ENCODE measurements at regions of chr11 and their contacts with region 1.

Region 1: GRCh38 chr11:87352759-87353707 is 315.3 kb downstream of the TMEM135 start:
- DNase-seq: peak; percentile 80 to 86 (median 85)
- ATAC-seq: peak; percentile 89
- H3K4me3 ChIP-seq: no peak overlapping the region
- H3K27ac ChIP-seq: no peak overlapping the region
- H3K4me1 ChIP-seq: no peaks in the 10 kb centered on the region
- H3K27me3 ChIP-seq: no peaks in the 10 kb centered on the region
- CTCF ChIP-seq: peak; percentile 93 to 99 (median 97)
- POLR2A ChIP-seq: no peak

Region 2: GRCh38 chr11:87421422-87421821 is 68.4 kb after region 1 on chr11:
- intact Hi-C with region 1: loop called (anchors 5 kb)
- DNase-seq: peak; percentile 24 to 69 (median 41)
- ATAC-seq: peak; percentile 81
- H3K4me3 ChIP-seq: no peak overlapping the region
- H3K27ac ChIP-seq: no peak overlapping the region
- H3K4me1 ChIP-seq: no peaks in the 10 kb centered on the region
- H3K27me3 ChIP-seq: no peaks in the 10 kb centered on the region
- CTCF ChIP-seq: peak; percentile 53 to 77 (median 71)
- POLR2A ChIP-seq: no peak

Region 3: GRCh38 chr11:87529486-87529885 is 176.5 kb after region 1 on chr11:
- intact Hi-C with region 1: no loop called
- DNase-seq: no peak
- ATAC-seq: no peak
- H3K4me3 ChIP-seq: no peak overlapping the region
- H3K27ac ChIP-seq: no peak overlapping the region
- H3K4me1 ChIP-seq: no peaks in the 10 kb centered on the region
- H3K27me3 ChIP-seq: no peaks in the 10 kb centered on the region
- CTCF ChIP-seq: no peak
- POLR2A ChIP-seq: no peak

Region 4: GRCh38 chr11:88543902-88544655 is 1191.0 kb after region 1 on chr11:
- intact Hi-C with region 1: loop called (anchors 10 kb)
- DNase-seq: peak; percentile 74 to 82 (median 80)
- ATAC-seq: peak; percentile 99
- H3K4me3 ChIP-seq: no peak overlapping the region
- H3K27ac ChIP-seq: no peak overlapping the region
- H3K4me1 ChIP-seq: peaks cover 3% of the 10 kb centered on the region
- H3K27me3 ChIP-seq: no peaks in the 10 kb centered on the region
- CTCF ChIP-seq: peak; percentile 79 to 98 (median 91)
- POLR2A ChIP-seq: no peak

Measured in body of pancreas (tissue), 4 donors.